Activated T-helper 1 cell treated with anti-CD3 and anti-CD28 coated beads, Interleukin-12 subunit alpha, Interleukin-12 subunit beta, Interleukin-2, Interleukin-4 antibody, amounts not matched to agents 30 ng/mL and 10 ng/mL and 1 ng/mL, durations not matched to agents 14 hours and 24 hours and 36 hours (primary cell): ENCODE measurements at regions of chr19 and their contacts with region 1.

Region 1: GRCh38 chr19:29844891-29845572 is 33.2 kb downstream of the CCNE1 start:
- DNase-seq: peak; percentile 93
- H3K4me3 Mint-ChIP-seq: peak overlapping the region; percentile 84
- H3K27ac Mint-ChIP-seq: peak overlapping the region; percentile 80
- H3K4me1 Mint-ChIP-seq: peaks cover 30% of the 10 kb centered on the region
- H3K27me3 Mint-ChIP-seq: peaks cover 4% of the 10 kb centered on the region

Region 2: DNA sequence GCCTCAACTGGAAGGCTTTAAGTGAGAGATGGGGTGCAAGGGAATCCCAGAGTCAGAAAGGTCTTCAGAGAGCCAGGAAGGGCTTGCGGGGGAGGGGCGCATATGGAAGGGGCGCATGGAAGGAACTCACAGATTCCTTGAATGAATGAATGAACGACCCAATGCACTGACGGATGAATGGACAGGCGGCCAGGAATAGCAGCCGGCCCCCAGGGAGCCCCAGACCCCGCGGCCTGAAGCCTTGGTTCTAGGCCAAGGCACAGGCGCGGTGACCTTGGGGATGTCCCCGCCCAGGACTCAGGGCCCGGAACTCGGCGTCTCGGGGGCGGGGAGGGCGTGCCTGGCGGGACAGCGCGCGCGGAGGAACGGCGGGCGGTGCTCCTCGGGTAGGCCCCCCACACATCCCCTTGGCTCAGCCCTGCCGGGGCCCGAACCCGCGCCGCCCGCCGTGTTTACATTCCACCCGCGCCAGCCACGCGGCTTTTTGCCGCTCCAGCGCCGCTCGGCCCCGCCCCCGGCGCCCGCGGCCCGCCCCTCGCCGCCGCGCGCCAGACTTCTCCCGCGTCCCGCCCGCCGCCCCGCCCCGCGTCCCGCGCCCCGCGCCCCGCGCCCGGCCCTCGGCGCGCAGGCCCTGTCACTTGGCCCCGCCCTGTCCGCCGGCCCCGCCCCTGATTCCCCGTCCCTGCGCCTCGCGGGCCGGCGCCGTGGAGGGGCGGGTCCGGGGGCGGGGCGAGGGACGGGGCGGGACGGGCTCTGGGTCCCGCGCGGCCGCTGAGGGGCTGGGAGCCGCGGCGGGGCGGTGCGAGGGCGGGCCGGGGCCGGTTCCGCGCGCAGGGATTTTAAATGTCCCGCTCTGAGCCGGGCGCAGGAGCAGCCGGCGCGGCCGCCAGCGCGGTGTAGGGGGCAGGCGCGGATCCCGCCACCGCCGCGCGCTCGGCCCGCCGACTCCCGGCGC is 33.6 kb before region 1 on chr19 and contains the start of gene CCNE1:
- intact Hi-C with region 1: loop called (anchors 1 kb)
- DNase-seq: peak; percentile 92
- H3K4me3 Mint-ChIP-seq: peak within 1 kb of the TSS; percentile 97
- H3K27ac Mint-ChIP-seq: peak within 1 kb of the TSS; percentile 92
- H3K4me1 Mint-ChIP-seq: peaks cover 38% of the 10 kb centered on the region
- H3K27me3 Mint-ChIP-seq: no peaks in the 10 kb centered on the region
- total RNA-seq, gene CCNE1: 55.1 and 58.4 TPM in 2 replicates

Region 3: GRCh38 chr19:30391554-30392551 is 546.8 kb after region 1 on chr19:
- intact Hi-C with region 1: no loop called
- DNase-seq: no peak
- H3K4me3 Mint-ChIP-seq: no peak overlapping the region
- H3K27ac Mint-ChIP-seq: no peak overlapping the region
- H3K4me1 Mint-ChIP-seq: no peaks in the 10 kb centered on the region
- H3K27me3 Mint-ChIP-seq: peaks cover 4% of the 10 kb centered on the region